Ovary (tissue), 10 donors: ENCODE measurements at regions of chr22 and their contacts with region 1.

Region 1: GRCh38 chr22:33909075-33909458 is 11.2 kb downstream of the LARGE1 start:
- DNase-seq: peak; percentile 40 to 59 (median 49)
- H3K4me3 ChIP-seq: no peak overlapping the region
- H3K27ac ChIP-seq: peak overlapping the region in 1 of 2 donors; percentile 55
- H3K4me1 ChIP-seq: peaks cover 6% of the 10 kb centered on the region
- H3K27me3 ChIP-seq: no peaks in the 10 kb centered on the region
- CTCF ChIP-seq: no peak
- EP300 ChIP-seq: no peak
- POLR2A ChIP-seq: no peak

Region 2: DNA sequence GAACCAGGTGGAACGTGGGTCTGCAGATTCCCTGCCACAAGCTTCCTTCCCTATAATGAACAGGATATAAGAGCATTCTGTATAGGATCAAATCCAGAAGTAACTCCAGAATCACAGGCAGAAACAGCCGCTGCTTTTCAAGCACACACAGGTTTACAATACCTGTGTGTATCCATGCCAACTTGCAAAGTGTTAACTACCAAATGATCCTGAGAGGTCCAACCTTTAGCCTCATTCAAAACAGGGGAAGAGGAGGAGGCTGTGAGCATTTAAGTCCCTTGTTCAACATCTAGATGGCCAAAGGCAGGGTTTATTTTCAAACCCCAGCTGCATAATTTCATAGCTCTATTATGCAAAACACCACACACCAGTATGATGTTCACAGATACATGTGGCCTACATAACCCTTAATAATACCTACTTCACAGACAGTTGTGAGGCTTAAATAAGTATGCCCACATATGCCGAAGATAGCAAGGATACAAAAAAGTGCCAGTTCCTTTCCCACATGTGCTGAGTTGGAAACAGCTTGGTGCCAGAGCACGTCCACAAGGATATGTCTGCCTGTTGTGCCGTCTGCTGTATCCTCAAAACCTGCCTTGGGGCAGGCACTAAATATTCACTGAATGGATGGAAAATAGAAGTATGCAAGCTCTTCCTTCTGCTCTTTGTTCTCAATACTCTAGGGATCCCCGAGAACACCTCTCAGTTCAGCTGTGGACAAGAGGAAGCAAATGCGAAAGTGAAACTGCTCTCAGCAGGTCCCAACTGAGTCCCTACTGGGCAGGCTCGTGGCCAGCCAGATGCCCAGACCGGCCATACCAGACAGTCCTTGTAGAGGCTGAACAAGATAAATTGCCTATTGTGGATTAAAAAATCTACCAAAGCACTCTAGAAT is 55.6 kb before region 1 on chr22:
- intact Hi-C with region 1: no loop called
- DNase-seq: peak; percentile 47 to 69 (median 59)
- H3K4me3 ChIP-seq: peak overlapping the region; percentile 42
- H3K27ac ChIP-seq: peak overlapping the region in 1 of 2 donors; percentile 22
- H3K4me1 ChIP-seq: peaks cover 6% of the 10 kb centered on the region
- H3K27me3 ChIP-seq: no peaks in the 10 kb centered on the region
- CTCF ChIP-seq: no peak
- EP300 ChIP-seq: no peak
- POLR2A ChIP-seq: no peak

Region 3: DNA sequence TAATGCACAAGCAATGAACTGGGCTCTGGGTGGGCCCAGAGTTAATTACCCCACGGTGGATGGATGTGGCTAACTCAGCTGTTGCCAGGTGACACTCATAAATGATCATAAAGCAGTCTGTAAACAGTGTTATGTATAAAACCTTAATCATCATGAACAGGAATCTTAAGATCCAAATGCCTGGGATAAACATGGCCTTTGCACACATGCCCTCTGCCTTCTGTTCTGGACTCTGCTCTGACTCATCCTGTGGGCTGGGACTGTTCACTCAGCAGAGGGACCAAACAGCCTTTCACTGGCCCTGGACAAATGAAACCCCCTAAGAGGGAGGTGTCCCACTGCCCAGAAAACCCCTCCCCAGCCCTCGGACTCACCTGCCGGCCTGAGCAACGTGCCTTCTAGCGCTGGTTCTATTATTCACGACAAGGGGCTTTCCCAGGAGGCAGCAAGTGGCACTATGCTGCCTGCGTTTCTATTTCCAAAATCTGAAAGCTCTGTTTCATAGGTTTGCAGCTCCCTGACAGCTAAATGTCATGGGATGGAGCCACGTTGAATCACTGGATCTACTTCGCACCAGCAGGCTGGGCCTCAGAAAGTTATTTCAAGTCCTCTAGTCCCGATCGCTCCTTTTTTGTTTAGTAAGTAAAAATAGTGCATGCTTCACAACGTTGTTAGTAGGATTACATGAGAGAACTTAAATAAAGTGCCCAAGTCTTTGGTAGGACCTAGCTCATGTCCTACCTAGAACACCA is 41.8 kb before region 1 on chr22:
- intact Hi-C with region 1: loop called in 2 of 4 experiments (anchors 5 kb)
- DNase-seq: no peak
- H3K4me3 ChIP-seq: no peak overlapping the region
- H3K27ac ChIP-seq: no peak overlapping the region
- H3K4me1 ChIP-seq: peaks cover 22% of the 10 kb centered on the region
- H3K27me3 ChIP-seq: no peaks in the 10 kb centered on the region
- CTCF ChIP-seq: no peak
- EP300 ChIP-seq: no peak
- POLR2A ChIP-seq: no peak

Region 4: DNA sequence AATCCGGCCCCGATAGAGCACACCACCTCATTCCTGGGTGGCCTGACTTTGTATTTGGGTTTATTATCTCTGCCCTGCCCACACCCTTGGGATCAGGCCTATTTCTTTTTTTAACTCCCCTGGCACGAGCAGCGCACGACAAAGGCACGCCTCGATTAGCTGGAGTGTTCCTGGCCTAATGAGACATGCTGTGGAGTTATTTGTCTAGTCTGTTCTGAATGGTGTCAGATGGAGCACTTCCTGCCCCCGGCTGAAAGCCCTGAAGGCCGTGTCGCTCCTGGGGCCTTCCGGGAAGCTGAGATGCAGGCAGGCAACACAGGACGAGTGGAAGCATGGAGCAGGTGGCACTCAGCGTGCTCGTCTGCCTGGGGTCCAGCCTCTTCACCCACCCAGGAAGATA is 35.9 kb before region 1 on chr22:
- intact Hi-C with region 1: loop called in 2 of 4 experiments (anchors 5 kb)
- DNase-seq: peak in 4 of 5 donors; percentile 22 to 47 (median 32)
- H3K4me3 ChIP-seq: no peak overlapping the region
- H3K27ac ChIP-seq: no peak overlapping the region
- H3K4me1 ChIP-seq: peaks cover 14% of the 10 kb centered on the region
- H3K27me3 ChIP-seq: no peaks in the 10 kb centered on the region
- CTCF ChIP-seq: no peak
- EP300 ChIP-seq: no peak
- POLR2A ChIP-seq: no peak

Region 5: GRCh38 chr22:34620832-34621231 is 711.8 kb after region 1 on chr22:
- intact Hi-C with region 1: no loop called
- DNase-seq: no peak
- H3K4me3 ChIP-seq: no peak overlapping the region
- H3K27ac ChIP-seq: no peak overlapping the region
- H3K4me1 ChIP-seq: no peaks in the 10 kb centered on the region
- H3K27me3 ChIP-seq: no peaks in the 10 kb centered on the region
- CTCF ChIP-seq: no peak
- EP300 ChIP-seq: no peak
- POLR2A ChIP-seq: no peak